Right ventricle myocardium inferior (tissue), 1 donor: ENCODE measurements at regions of chr2 and their contacts with region 1.

Region 1: GRCh38 chr2:66434679-66435548 is at the start of gene MEIS1:
- DNase-seq: peak; percentile 92
- ATAC-seq: peak; percentile 91
- total RNA-seq, gene MEIS1: 40.1 TPM

Region 2: GRCh38 chr2:66346231-66346664 is 88.7 kb before region 1 on chr2:
- intact Hi-C with region 1: no loop called
- DNase-seq: no peak
- ATAC-seq: no peak

Region 3: GRCh38 chr2:66495788-66496640 is 61.1 kb after region 1 on chr2:
- intact Hi-C with region 1: loop called (anchors 2 kb)
- DNase-seq: peak; percentile 46
- ATAC-seq: peak; percentile 56

Region 4: DNA sequence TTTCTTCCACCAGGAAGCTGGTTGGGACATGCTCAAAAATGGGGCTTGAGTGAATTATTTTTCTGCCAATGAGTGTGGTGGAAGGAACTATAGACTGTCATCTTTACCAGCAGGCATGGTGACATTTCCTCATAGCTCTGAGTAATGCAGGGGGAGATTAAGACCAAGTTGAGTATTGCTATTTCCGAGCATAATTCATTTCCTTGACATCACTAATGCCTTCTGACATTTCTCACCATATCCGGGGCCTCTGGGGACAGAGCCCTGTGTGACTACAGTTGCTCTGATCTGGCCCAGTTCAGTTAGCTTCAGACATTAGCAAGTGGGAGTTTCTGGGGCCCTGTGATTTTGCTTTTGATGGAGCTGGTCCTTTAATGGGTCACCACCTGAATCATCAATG is 410.4 kb after region 1 on chr2:
- intact Hi-C with region 1: loop called (anchors 5 kb)
- DNase-seq: no peak
- ATAC-seq: no peak

Region 5: DNA sequence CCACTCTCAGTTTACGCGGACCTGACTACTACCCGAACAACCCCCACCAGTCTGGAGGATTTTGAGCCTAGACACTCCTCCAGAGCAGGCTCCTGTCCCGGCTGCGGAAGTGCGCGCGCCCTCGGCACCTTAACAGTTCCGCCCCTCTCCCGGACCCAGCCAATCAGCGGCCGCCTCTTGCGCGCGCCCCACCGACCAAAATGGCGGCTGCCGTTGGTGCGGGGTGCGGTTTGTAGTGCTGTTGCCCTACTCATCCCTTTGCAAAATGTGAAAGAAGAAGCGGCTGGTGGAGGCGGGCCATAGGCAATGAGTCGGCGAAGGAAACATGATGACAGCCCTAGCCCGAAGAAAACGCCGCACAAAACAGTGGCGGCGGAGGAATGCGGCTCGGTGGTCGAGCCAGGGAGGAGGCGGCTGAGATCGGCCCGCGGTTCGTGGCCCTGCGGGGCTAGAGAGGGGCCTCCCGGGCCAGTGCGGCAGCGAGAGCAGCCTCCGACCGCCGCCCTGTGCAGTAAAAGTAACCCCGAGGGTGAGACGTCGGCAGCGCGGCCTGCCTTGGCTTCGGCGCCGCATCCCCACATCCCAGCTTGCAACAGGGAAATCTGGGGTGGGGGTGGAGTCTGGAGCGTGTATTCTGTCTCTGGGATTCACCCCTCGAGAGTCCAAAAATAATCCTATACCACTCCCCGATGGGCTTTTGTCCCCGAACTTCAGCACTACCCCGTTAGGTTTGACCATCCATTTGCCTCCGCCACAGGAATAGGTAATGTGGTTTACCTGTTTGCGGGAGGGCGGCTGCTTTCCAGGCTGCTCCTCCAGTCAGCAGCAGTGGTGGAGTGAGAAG is 962.5 kb after region 1 on chr2 and contains the start of gene ETAA1:
- intact Hi-C with region 1: loop called (anchors 5 kb)
- DNase-seq: peak; percentile 97
- ATAC-seq: peak; percentile 100
- total RNA-seq, gene ETAA1: 4.6 TPM

Region 6: GRCh38 chr2:67650291-67651133 is 1215.6 kb after region 1 on chr2:
- intact Hi-C with region 1: loop called (anchors 2 kb)
- DNase-seq: peak; percentile 76
- ATAC-seq: peak; percentile 88